ENCODE measurements at regions of chr2 and their contacts with region 1.

Region 1: DNA sequence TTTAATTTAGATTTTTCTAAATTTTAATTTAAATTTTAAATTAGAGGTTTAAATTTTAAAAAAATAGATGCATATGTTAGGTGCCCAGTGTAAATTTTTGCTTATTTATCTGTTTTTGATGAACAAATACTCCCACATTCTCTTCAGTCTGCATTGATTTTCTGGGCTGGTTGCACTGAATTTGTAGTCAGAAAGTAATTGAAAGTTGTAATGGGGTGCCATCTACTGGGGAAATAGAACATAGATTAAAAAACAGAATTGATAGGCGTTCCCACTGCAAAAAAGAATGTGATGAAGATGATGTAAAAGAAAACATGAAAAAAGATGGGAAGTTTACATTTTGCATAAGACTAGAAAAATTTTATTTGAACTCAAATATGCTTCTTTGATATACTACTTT is 51.7 kb upstream of the CCDC85A start:
- DNase-seq: no peak
- ATAC-seq: no peak
- H3K4me3 ChIP-seq: no peak overlapping the region
- H3K27ac ChIP-seq: no peak overlapping the region
- H3K4me1 ChIP-seq: no peaks in the 10 kb centered on the region
- H3K27me3 ChIP-seq: no peaks in the 10 kb centered on the region

Region 2: DNA sequence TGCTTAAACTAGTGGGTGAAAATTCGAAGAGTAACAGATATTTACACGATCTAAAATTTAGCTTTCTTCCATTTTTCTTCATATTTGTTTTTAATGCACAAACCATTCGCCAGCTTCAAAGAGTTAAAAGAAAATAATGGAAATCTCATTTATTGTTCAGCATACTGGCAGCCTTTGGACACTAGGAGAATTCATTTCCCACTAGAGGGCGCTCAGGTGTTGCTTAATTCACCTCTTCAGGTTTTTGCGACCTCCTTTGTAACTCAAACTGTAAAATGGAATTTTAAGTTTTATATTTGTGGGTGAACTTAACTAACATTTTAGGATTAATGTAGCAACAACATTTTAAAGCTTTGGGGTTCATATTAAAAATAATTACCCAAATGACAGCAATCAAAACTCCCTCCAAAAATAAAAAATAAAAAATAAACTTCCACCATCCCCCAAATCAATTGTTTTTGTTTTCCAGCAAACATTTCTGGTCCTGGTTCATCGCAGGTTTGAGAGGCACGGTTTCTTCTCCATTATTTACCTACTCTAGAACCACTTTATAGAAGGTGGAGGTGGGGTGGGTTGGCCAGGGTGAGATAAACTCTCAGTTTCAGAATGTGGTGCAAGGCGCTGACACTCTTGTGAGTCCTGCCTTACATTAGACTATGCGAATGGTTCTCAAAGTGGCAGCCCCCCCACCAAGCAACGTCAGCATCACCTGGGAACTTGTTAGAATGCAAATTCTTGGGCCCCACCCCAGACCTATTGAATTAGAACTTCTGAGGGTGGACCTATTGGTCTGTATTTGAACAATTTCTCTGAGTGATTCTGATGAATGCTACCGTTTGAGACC is 413.8 kb before region 1 on chr2:
- intact Hi-C with region 1: loop called (anchors 2 kb)
- DNase-seq: no peak
- ATAC-seq: peak; percentile 82
- H3K4me3 ChIP-seq: no peak overlapping the region
- H3K27ac ChIP-seq: no peak overlapping the region
- H3K4me1 ChIP-seq: no peaks in the 10 kb centered on the region
- H3K27me3 ChIP-seq: no peaks in the 10 kb centered on the region

Region 3: DNA sequence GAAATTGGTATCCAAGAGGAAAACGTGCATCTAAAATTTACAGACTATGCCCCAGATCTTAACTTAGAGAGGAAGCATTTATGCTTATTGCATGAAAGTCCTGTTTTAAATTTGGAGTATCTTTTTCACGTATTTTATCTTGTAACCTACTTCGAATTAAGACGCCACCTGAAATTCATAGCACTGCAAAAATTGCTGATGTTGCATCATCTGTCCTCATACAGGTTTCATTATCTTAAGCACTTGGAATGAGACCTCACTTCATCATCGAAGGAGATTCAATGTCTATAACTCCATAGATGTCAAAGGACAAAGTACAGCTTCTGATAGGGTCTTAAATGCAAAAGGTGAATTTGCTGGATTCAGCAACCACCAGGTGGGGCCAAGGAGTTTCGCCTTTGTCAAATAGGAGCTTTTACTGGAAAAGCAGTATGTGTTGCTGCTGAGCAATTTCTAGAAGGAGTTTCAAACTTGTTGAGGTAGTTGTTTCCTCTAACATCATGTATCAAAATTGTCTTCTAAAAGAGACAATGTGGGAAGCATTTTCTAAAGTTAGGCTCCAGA is 54.7 kb before region 1 on chr2:
- intact Hi-C with region 1: no loop called
- DNase-seq: no peak
- ATAC-seq: no peak
- H3K4me3 ChIP-seq: no peak overlapping the region
- H3K27ac ChIP-seq: no peak overlapping the region
- H3K4me1 ChIP-seq: no peaks in the 10 kb centered on the region
- H3K27me3 ChIP-seq: no peaks in the 10 kb centered on the region

Region 4: GRCh38 chr2:56687169-56687568 is 555.0 kb after region 1 on chr2:
- intact Hi-C with region 1: no loop called
- DNase-seq: no peak
- ATAC-seq: no peak
- H3K4me3 ChIP-seq: no peak overlapping the region
- H3K27ac ChIP-seq: no peak overlapping the region
- H3K4me1 ChIP-seq: no peaks in the 10 kb centered on the region
- H3K27me3 ChIP-seq: no peaks in the 10 kb centered on the region